PC-9 (cell line): ENCODE measurements at regions of chr21 and their contacts with region 1.

Region 1: DNA sequence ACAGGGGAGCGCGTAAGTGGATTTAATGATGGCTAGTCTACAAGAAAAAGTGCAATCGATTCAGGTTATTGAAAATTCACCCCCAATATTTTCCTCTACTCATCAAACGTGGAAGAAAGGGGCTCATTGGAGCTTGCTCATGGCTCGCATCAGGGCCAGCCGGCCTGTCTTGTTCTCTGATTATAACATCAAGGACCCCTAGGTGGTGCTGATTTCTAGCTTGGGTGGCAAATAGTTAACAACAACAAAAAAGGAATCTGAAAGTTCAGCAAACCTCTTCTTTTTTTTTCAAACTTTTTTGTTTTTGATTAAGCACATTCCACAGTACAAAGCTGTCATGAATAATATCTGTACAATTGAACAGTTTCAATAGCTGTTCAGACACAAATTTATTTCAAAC is 35.8 kb upstream of the SOD1 start:
- DNase-seq: no peak
- H3K4me3 ChIP-seq: no peak overlapping the region
- H3K27ac ChIP-seq: no peak overlapping the region
- H3K4me1 ChIP-seq: no peaks in the 10 kb centered on the region
- H3K27me3 ChIP-seq: no peaks in the 10 kb centered on the region
- CTCF ChIP-seq: no peak

Region 2: GRCh38 chr21:32392880-32393676 is 769.4 kb after region 1 on chr21 and contains the start of gene URB1:
- CTCF ChIA-PET with region 1: no interaction called
- POLR2A ChIA-PET with region 1: no interaction called
- intact Hi-C with region 1: no loop called
- DNase-seq: peak; percentile 69 to 92
- H3K4me3 ChIP-seq: peak within 1 kb of the TSS; percentile 91
- H3K27ac ChIP-seq: peak within 1 kb of the TSS; percentile 80
- H3K4me1 ChIP-seq: peaks cover 19% of the 10 kb centered on the region
- H3K27me3 ChIP-seq: no peaks in the 10 kb centered on the region
- CTCF ChIP-seq: no peak
- total RNA-seq, gene URB1: 11.0 TPM in 2 replicates

Region 3: GRCh38 chr21:33286600-33287456 is 1663.2 kb after region 1 on chr21:
- CTCF ChIA-PET with region 1: no interaction called
- POLR2A ChIA-PET with region 1: interaction called, 18 read pairs
- intact Hi-C with region 1: no loop called
- DNase-seq: peak; percentile 62 to 66
- H3K4me3 ChIP-seq: no peak overlapping the region
- H3K27ac ChIP-seq: peak overlapping the region; percentile 43
- H3K4me1 ChIP-seq: peaks cover 16% of the 10 kb centered on the region
- H3K27me3 ChIP-seq: no peaks in the 10 kb centered on the region
- CTCF ChIP-seq: no peak